ENCODE measurements at regions of chr5 and their contacts with region 1.

Region 1: GRCh38 chr5:32489791-32490582 is 45.4 kb upstream of the ZFR start:
- DNase-seq: peak; percentile 81

Region 2: DNA sequence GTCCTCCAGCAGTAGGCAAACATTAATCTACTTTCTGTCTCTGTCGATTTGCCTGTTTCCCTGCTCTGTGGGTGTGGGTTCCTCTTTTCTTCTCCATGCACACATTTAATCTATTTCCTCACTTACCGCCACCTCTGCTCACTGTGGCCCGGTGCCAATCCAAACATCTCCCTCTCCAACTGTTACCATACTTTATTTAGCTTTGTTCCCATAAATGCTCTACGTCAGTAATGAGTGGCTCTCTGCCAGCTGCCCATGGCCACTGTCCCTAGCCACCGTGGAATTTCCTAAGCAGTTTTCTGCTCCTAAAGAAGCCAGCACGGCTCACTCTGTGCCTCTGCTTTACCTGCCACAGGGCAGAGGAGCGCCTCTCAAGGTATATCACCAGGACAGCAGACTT is 296.4 kb before region 1 on chr5:
- in situ Hi-C with region 1: no loop called
- DNase-seq: peak; percentile 98

Region 3: GRCh38 chr5:32542216-32543059 is 52.5 kb after region 1 on chr5:
- in situ Hi-C with region 1: no loop called
- DNase-seq: peak; percentile 43

Region 4: GRCh38 chr5:32585446-32586275 is 95.7 kb after region 1 on chr5 and contains the start of gene SUB1:
- in situ Hi-C with region 1: loop called (anchors 25 kb)
- DNase-seq: peak; percentile 95

Measured in KBM-7 (cell line).